Dendritic cell treated with granulocyte-macrophage colony-stimulating factor and Interleukin-4, amounts not matched to agents 40 ng/mL and 50 ng/mL, for 4 days (primary cell): ENCODE measurements at regions of chr6 and their contacts with region 1.

Region 1: GRCh38 chr6:28266962-28267694 is at the start of gene ZSCAN26:
- H3K4me3 Mint-ChIP-seq: no peak within 1 kb of the TSS
- H3K27ac Mint-ChIP-seq: no peak within 1 kb of the TSS
- H3K4me1 Mint-ChIP-seq: no peaks in the 10 kb centered on the region
- H3K27me3 Mint-ChIP-seq: no peaks in the 10 kb centered on the region

Region 2: GRCh38 chr6:28182255-28182654 is 84.9 kb before region 1 on chr6:
- intact Hi-C with region 1: no loop called
- H3K4me3 Mint-ChIP-seq: no peak overlapping the region
- H3K27ac Mint-ChIP-seq: no peak overlapping the region
- H3K4me1 Mint-ChIP-seq: no peaks in the 10 kb centered on the region
- H3K27me3 Mint-ChIP-seq: peaks cover 12% of the 10 kb centered on the region

Region 3: DNA sequence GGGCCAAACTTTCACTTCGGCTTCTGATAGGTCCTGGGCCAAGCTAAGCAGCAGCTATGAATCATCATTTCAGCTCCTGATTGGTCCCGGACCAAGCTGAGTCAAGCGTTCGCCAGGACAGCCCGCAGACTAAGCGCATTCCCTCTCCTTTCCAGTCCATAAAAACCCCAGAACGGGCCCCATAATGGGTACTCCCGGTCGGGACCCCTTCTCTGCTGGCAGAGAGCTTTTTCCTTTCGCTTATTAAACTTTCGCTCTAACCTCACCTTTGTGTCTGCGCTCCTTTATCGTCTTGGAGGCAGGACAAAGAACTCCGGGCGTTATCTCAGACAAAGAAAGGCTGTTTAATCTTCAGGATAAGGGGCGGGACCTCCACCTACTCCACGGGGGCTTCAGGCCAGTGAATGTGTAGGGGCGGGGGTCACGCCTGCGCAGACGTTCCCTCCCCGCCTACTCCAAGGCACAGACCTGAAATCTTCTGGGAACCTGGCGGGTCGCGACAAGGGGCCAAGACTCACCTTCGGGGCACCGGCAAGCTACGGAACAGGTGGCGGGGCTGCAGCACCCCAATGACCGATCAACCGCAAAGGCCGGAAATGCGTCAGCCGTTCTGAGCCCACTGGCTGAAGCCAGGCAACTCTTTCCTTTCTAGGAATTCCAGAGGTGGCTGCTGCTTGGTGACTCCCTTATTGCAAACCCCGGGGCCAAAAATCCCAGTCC is 68.6 kb after region 1 on chr6 and contains the start of gene ZSCAN31:
- intact Hi-C with region 1: loop called (anchors 5 kb)
- H3K4me3 Mint-ChIP-seq: no peak within 1 kb of the TSS
- H3K27ac Mint-ChIP-seq: no peak within 1 kb of the TSS
- H3K4me1 Mint-ChIP-seq: peaks cover 25% of the 10 kb centered on the region
- H3K27me3 Mint-ChIP-seq: peaks cover 2% of the 10 kb centered on the region